HEK293T (cell line): ENCODE measurements at regions of chr12 and their contacts with region 1.

Region 1: DNA sequence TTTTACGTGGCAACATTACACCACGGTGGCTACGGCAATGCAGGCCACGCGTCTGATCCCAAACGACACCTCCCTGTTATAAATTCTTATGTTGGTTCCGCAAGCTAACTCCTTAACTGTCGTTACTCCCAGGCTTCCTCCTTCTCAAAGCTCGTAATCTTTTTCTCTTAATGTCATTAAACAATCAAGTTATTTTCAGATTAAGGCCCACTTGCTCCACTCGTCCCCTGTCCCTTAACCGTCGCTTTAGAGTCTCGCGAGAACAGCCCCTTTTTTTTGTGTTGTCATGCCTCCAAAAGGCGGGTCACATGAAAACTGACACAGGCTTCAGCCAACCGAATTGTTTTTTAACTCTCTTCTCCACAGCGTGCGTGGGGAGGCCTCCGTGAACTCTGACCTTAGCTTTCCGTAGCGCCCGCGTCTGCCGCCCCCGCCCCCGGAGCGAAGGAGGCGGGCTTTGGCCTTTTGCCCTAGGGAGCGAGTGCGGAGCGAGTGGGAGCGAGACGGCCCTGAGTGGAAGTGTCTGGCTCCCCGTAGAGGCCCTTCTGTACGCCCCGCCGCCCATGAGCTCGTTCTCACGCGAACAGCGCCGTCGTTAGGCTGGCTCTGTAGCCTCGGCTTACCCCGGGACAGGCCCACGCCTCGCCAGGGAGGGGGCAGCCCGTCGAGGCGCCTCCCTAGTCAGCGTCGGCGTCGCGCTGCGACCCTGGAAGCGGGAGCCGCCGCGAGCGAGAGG is at the start of gene CAND1:
- DNase-seq: peak; percentile 84

Region 2: GRCh38 chr12:67256649-67257048 is 12.4 kb before region 1 on chr12:
- CTCF ChIA-PET with region 1: no interaction called
- POLR2A ChIA-PET with region 1: interaction called, 22 read pairs
- DNase-seq: no peak

Region 3: GRCh38 chr12:67280572-67280971 is 11.5 kb after region 1 on chr12:
- CTCF ChIA-PET with region 1: no interaction called
- POLR2A ChIA-PET with region 1: interaction called, 21 read pairs
- DNase-seq: no peak

Region 4: DNA sequence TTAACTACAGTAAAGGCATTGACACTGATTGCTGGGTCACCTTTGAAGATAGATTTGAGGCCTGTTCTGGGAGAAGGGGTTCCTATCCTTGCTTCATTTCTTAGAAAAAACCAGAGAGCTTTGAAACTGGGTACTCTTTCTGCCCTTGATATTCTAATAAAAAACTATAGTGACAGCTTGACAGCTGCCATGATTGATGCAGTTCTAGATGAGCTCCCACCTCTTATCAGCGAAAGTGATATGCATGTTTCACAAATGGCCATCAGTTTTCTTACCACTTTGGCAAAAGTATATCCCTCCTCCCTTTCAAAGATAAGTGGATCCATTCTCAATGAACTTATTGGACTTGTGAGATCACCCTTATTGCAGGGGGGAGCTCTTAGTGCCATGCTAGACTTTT is 36.5 kb after region 1 on chr12:
- CTCF ChIA-PET with region 1: no interaction called
- POLR2A ChIA-PET with region 1: interaction called, 10 read pairs
- DNase-seq: no peak

Region 5: DNA sequence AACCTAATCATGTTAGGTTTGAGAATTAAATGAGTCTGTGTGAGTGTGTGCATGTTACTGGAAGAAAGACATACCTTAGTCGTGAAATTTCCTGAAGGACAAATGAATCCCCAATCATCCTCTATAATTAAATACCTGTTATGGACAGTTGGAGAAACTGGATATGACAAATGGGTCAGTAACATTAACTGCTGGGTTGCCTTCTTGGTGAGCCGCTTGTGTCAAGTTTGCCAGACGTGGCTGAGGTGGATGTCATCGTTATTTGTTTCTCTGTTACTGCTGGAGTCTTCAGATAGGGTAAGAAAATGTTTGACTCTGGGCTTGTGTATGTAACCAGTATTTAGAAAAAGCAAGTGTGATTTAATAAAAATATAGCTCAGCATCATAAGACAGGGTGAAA is 131.7 kb after region 1 on chr12:
- CTCF ChIA-PET with region 1: no interaction called
- POLR2A ChIA-PET with region 1: no interaction called
- DNase-seq: no peak